ENCODE measurements at regions of chr15 and their contacts with region 1.

Region 1: GRCh38 chr15:37891766-37892368 is 42.6 kb upstream of the TMCO5A start:
- DNase-seq: peak; percentile 5
- ATAC-seq: no peak
- H3K4me3 ChIP-seq: no peak overlapping the region
- H3K4me3 Mint-ChIP-seq: no peak overlapping the region
- H3K27ac ChIP-seq: no peak overlapping the region
- H3K27ac Mint-ChIP-seq: no peak overlapping the region
- H3K4me1 ChIP-seq: no peaks in the 10 kb centered on the region
- H3K4me1 Mint-ChIP-seq: no peaks in the 10 kb centered on the region
- H3K27me3 ChIP-seq: no peaks in the 10 kb centered on the region
- H3K27me3 Mint-ChIP-seq: peaks cover 14% of the 10 kb centered on the region
- CTCF ChIP-seq: peak; percentile 67

Region 2: DNA sequence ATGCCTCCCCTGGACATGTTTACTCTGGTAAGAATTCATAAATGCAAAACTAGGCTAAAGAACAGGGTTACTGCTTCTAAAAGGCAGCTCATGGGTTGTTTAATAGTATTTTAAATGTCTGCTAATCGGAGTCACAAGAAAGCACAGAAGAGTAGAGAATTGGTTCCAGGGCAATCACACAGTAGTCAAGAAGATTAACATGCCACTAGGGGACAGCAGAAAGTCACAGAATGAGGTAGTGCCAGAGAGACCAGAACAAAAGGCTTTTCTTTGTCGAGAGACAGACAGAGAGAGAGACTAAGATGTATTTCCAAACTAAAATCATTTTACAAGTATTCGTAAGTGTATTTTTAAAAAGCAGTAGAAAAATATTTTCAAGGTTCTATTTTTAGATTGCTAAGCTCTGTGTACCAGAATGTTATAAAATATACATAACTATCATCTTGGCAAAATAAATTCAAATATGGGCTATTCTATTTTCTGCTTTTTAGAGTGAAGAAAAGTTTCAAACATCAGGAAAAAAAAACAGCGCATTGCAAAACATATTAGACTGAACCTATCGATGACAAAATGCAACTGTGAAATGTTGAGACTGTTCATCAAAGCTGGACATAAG is 1390.7 kb before region 1 on chr15:
- CTCF ChIA-PET with region 1: interaction called, 11 read pairs
- POLR2A ChIA-PET with region 1: no interaction called
- intact Hi-C with region 1: loop called (anchors 5 kb)
- DNase-seq: peak; percentile 29
- ATAC-seq: no peak
- H3K4me3 ChIP-seq: no peak overlapping the region
- H3K4me3 Mint-ChIP-seq: no peak overlapping the region
- H3K27ac ChIP-seq: no peak overlapping the region
- H3K27ac Mint-ChIP-seq: no peak overlapping the region
- H3K4me1 ChIP-seq: no peaks in the 10 kb centered on the region
- H3K4me1 Mint-ChIP-seq: no peaks in the 10 kb centered on the region
- H3K27me3 ChIP-seq: no peaks in the 10 kb centered on the region
- H3K27me3 Mint-ChIP-seq: peaks cover 10% of the 10 kb centered on the region
- CTCF ChIP-seq: peak; percentile 65

Region 3: DNA sequence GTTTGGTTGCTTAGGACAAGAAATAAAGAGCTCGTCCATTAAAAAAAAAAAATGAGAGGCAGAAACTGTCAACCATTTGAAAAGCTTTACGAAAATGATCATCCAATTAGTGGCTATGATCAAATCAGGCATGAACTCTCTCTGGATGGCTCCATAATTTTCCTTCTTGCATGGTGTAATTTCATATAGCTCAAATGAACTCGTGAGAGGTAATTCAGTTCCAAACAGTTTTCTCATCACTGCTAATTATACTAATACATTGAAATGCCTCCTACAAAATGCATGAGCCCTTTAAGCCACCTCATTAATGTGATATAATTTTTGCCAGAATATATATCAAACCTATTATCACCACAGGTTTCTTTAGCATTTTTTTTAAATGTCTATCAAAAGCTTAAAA is 552.0 kb before region 1 on chr15:
- CTCF ChIA-PET with region 1: no interaction called
- POLR2A ChIA-PET with region 1: no interaction called
- intact Hi-C with region 1: no loop called
- DNase-seq: no peak
- ATAC-seq: no peak
- H3K4me3 ChIP-seq: no peak overlapping the region
- H3K4me3 Mint-ChIP-seq: no peak overlapping the region
- H3K27ac ChIP-seq: no peak overlapping the region
- H3K27ac Mint-ChIP-seq: no peak overlapping the region
- H3K4me1 ChIP-seq: no peaks in the 10 kb centered on the region
- H3K4me1 Mint-ChIP-seq: no peaks in the 10 kb centered on the region
- H3K27me3 ChIP-seq: no peaks in the 10 kb centered on the region
- H3K27me3 Mint-ChIP-seq: no peaks in the 10 kb centered on the region
- CTCF ChIP-seq: no peak

Region 4: DNA sequence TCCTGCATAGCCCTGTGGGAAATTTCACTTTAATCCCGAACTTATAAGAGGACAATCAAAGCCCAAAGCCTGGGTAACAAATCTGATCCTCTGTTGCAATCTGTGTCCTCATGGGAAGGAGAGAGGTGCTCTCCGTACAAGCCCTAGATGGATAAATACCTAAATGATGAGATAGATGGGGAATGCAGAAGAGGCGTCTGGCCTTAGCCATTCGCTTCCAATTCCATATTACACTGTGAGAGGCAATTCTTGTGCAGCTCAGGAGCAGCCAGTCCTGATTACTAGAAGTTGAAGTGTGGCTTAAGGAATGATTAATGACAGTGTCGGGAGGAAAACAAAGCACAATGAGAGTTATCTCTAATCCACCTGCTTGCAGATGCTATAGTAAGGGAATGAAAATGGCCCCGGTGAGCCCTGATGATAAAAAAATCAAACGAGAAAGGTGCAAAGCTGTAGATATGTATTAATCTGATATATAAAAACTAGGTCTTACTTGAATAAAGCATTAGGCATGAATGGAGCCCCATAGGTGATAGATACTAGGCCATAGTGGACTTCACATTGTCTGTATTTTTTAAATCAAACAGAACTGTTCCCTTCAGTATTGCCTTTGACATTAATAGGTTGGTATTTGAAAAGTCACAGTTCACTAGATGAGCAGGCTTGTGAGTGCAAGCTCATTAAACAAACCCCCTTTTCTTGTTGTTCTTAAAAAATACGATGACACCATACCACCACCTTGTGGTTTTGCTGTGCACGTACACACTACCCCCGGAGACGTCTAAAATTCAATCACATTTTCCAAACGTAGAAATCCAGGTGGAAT is 11.6 kb before region 1 on chr15:
- CTCF ChIA-PET with region 1: interaction called, 12 read pairs
- POLR2A ChIA-PET with region 1: no interaction called
- intact Hi-C with region 1: no loop called
- DNase-seq: peak; percentile 3
- ATAC-seq: no peak
- H3K4me3 ChIP-seq: no peak overlapping the region
- H3K4me3 Mint-ChIP-seq: no peak overlapping the region
- H3K27ac ChIP-seq: no peak overlapping the region
- H3K27ac Mint-ChIP-seq: no peak overlapping the region
- H3K4me1 ChIP-seq: no peaks in the 10 kb centered on the region
- H3K4me1 Mint-ChIP-seq: no peaks in the 10 kb centered on the region
- H3K27me3 ChIP-seq: no peaks in the 10 kb centered on the region
- H3K27me3 Mint-ChIP-seq: peaks cover 21% of the 10 kb centered on the region
- CTCF ChIP-seq: peak; percentile 52

Measured in B cell (primary cell).